Endothelial cell of umbilical vein (primary cell): ENCODE measurements at regions of chr5 and their contacts with region 1.

Region 1: GRCh38 chr5:151239237-151239861 is 13.6 kb upstream of the GM2A start:
- DNase-seq: peak; percentile 67
- H3K4me3 ChIP-seq: no peak overlapping the region
- H3K27ac ChIP-seq: no peak overlapping the region
- H3K4me1 ChIP-seq: no peaks in the 10 kb centered on the region
- H3K27me3 ChIP-seq: no peaks in the 10 kb centered on the region
- CTCF ChIP-seq: peak; percentile 73 to 88
- POLR2A ChIP-seq: no peak

Region 2: DNA sequence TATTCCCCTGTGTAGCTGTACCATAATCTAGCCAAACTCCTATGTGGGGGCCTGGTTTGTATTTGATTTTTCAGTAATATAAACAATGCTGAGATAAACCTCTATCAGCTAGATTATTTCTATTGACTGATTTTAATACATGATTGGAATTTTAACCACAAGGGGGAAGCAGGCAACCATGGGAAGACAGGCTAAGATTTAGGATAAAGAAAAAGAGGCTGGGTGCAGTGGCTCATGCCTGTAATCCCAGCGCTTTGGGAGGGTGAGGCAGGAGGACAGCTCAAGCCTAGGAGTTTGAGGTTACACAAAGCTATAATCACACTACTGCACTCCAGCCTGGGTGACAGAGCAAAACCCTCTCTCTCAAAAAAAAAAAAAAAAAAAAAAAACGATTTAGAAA is 237.1 kb before region 1 on chr5:
- CTCF ChIA-PET with region 1: interaction called, 19 read pairs
- POLR2A ChIA-PET with region 1: no interaction called
- dilution Hi-C with region 1: no loop called
- intact Hi-C with region 1: loop called (anchors 1 kb)
- DNase-seq: peak; percentile 55
- H3K4me3 ChIP-seq: no peak overlapping the region
- H3K27ac ChIP-seq: no peak overlapping the region
- H3K4me1 ChIP-seq: no peaks in the 10 kb centered on the region
- H3K27me3 ChIP-seq: peaks cover 0 to 4% of the 10 kb centered on the region in 2 experiments
- CTCF ChIP-seq: peak in 1 of 2 donors; percentile 36
- POLR2A ChIP-seq: no peak

Region 3: DNA sequence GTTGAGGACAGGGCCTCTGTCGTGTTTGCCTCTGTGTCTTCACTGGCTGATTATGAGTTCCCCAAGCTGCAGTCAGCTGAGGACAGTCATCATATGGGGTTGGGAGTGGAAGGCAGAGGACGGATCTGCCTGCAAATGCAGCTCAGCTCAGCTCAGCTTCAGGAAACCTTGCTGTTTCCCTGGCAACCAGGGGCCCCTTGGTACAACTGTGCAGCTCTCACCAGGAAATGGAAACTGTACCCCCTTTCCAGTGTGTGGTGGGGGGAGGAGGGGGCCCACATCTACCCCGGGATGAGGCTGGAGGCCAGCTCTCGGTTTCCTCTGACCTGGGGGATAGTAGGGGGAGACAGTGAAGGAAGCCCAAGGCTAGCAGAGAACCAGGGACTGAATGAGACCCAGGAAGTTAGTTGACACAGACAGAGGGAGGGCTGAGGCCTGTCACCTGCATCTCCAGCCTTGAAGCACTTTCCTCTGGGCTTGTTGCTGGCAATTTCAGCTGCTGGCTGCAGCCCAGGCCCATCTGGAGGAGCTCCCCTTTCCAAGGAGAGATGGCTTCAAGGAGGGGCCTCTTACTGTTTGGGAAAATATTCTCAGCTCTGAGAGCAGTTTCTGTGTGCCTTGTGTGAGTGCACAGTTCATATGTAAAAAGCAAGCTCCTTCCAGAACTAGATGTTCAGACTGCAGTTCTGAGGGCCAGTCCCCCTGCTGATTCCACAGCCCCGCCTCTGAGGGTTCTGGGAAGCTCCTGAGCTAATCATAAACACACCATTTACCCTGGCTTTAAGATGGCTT is 88.7 kb before region 1 on chr5:
- CTCF ChIA-PET with region 1: interaction called, 11 read pairs
- POLR2A ChIA-PET with region 1: no interaction called
- dilution Hi-C with region 1: no loop called
- intact Hi-C with region 1: no loop called
- DNase-seq: peak; percentile 38
- H3K4me3 ChIP-seq: no peak overlapping the region
- H3K27ac ChIP-seq: no peak overlapping the region
- H3K4me1 ChIP-seq: peaks cover 27% of the 10 kb centered on the region
- H3K27me3 ChIP-seq: no peaks in the 10 kb centered on the region
- CTCF ChIP-seq: no peak
- POLR2A ChIP-seq: no peak

Region 4: DNA sequence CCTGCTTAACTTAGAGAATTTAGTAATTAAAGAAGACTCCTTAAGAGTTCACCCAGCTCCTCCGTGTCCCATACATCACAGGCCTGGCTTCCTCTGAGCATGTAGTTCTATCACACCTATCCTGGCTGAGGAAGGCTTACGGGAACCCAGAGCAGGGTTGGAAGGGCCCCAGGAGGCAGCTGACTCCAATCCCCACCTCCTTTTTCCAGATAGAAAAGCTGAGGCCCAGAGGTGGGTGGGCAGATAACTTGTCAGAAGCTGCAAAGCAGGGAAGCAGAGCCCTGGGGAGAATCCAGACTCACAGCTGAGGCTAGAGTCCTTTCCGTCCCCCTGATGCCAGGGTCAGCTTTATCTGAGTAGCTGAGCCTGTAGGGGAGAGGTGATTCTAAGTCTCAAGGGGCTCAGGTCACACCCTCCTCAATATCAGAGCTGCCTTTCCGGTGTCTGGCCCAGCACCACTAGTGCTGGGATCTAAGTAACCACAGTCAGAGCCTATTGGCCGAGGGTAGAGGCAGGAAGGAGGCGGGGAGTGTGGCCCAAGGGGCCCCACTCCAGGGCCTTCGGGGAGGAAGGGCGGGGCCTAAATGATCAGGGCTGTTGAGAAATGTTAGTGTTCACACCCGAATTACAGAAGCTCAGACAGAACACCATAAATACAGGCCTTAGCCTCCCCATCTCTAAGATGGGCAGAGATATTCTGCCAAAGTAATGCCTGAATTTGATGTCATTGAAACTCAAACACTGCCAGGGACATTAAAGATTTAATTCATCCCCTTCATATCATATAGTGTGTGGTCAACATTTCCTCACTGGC is 25.3 kb before region 1 on chr5:
- CTCF ChIA-PET with region 1: interaction called, 10 read pairs
- POLR2A ChIA-PET with region 1: no interaction called
- dilution Hi-C with region 1: no loop called
- intact Hi-C with region 1: no loop called
- DNase-seq: peak; percentile 23
- H3K4me3 ChIP-seq: no peak overlapping the region
- H3K27ac ChIP-seq: no peak overlapping the region
- H3K4me1 ChIP-seq: peaks cover 10% of the 10 kb centered on the region
- H3K27me3 ChIP-seq: no peaks in the 10 kb centered on the region
- CTCF ChIP-seq: no peak
- POLR2A ChIP-seq: no peak

Region 5: DNA sequence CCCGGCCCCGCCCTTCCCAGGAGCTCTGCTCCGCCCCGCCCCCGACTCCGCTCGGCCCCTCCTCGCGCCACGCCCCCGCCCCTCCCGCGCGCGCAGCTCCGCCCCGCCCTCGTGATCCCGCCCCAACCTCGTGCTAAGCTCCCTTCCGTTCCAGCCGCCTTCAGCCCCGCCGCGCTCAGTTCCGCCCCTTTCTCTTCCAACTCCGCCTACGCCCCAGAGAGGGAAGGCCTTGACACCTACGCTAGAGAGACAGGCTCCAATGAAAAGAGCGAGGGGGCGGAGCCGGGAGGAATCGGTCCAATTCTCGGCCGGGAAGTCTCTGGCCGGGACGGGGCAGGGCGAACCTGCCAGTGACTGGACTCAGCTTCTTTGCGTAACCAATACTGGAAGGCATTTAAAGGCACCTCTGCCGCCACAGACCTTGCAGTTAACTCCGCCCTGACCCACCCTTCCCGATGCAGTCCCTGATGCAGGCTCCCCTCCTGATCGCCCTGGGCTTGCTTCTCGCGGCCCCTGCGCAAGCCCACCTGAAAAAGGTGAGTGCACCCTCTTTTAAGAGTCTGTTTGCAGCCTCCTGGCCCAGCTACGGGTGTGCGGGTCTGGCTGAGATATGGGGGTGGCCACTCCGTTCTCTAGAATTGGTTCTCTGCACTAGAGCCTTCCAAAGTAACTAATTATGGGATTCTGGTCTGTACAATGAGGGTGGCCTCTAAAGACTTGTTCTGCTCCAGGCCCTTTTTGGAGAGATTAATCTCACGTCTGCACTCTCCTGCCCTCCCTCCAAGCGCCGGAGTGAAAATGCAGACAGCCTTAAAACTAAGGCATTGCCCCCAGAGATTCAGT is 13.6 kb after region 1 on chr5 and contains the start of gene GM2A:
- CTCF ChIA-PET with region 1: interaction called, 28 read pairs
- POLR2A ChIA-PET with region 1: no interaction called
- dilution Hi-C with region 1: no loop called
- intact Hi-C with region 1: no loop called
- DNase-seq: peak; percentile 100
- H3K4me3 ChIP-seq: peak within 1 kb of the TSS; percentile 48 to 75 (median 55)
- H3K27ac ChIP-seq: no peak within 1 kb of the TSS
- H3K4me1 ChIP-seq: peaks cover 5% of the 10 kb centered on the region
- H3K27me3 ChIP-seq: no peaks in the 10 kb centered on the region
- CTCF ChIP-seq: no peak
- POLR2A ChIP-seq: peak; percentile 46
- total RNA-seq, gene GM2A: 21.2 and 22.5 TPM in 2 replicates

Region 6: DNA sequence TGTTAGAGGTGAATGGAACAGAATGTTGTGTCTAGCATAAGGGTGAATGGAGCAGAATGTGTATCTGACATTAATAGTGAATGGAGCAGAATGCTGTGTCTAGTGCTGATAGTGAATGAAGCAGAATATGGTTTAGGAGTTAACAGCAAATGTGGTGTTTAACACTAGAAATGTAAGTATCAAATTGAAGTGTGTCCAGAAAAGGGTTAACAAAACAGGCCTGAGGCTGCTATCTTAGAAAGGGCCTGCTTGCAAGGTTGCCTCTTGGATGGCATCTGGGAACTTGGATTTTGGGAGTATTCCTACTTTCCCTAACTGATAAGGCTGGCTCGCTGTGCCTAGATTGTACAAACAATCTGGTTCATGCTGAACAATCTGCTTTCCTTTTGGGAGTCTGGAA is 608.5 kb after region 1 on chr5:
- CTCF ChIA-PET with region 1: no interaction called
- POLR2A ChIA-PET with region 1: no interaction called
- dilution Hi-C with region 1: no loop called
- intact Hi-C with region 1: no loop called
- DNase-seq: no peak
- H3K4me3 ChIP-seq: no peak overlapping the region
- H3K27ac ChIP-seq: no peak overlapping the region
- H3K4me1 ChIP-seq: no peaks in the 10 kb centered on the region
- H3K27me3 ChIP-seq: no peaks in the 10 kb centered on the region
- CTCF ChIP-seq: no peak
- POLR2A ChIP-seq: no peak